ENCODE measurements at regions of chr3 and their contacts with region 1.

Region 1: DNA sequence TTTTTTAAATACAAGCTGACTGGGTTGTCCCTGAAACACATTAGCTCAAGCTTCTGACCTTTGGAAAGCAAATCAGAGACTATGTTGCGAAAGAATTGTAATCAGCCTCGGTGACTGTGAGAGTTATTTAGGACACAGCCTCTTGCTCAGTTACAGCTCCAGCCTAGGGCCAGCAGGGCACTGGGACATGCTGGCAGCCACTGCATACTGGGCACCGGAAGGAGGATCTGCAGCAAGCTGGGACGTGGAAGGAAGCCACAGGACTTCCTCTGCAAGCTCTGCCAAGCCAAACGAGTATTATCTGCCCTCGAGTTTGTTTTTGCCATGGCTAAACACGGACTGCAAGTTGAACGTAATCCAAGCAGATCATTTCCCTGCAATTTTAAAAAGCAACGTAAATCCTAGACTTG is 24.4 kb upstream of the COPG1 start:
- DNase-seq: no peak
- H3K4me3 ChIP-seq: peak overlapping the region; percentile 35
- H3K27ac ChIP-seq: peak overlapping the region; percentile 77
- H3K27me3 ChIP-seq: no peaks in the 10 kb centered on the region
- CTCF ChIP-seq: no peak

Region 2: DNA sequence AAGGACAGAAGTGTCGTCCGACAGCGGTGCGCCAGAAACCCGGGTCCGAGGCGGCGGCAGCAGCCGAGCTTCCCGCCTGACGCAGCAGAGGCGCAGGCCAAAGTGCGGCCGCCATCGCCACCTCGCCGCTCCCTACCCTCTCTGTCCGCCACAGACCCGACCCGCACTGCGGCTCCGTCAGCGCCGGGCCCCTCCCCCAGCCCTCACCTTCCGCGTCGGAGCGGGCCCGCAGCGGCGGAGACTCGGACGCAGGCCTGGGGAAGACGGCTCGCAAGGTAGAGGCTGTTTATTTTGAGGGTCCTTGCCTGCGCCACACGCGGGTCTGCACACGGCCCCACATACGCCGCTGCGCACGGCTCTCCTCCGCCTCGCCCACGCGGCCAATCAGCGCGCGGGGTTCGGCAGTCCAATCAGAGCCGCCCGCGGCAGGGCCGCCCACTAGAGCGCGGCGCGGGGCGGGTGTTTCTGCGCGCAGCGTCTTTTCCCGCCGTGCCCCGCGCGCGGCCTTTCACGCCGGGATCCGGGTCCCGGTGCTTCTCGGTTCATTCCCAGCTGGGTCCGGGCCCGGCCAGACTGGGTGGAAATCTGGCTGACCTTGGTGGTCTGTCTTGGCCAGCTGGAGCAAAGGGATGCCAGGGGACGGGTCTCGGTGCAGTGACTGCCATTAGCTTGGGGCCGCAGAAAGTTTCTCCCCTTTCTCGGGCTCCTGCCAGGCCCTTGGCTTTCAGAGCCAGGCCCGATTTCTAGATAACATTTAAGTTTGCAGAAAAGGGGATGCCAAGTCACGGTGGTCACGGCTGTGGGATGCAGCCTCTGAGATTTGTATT is 41.2 kb before region 1 on chr3 and contains the start of gene CNBP:
- CTCF ChIA-PET with region 1: interaction called, 3 read pairs
- POLR2A ChIA-PET with region 1: interaction called, 12 read pairs
- DNase-seq: peak; percentile 82
- H3K4me3 ChIP-seq: peak within 1 kb of the TSS; percentile 96
- H3K27ac ChIP-seq: peak within 1 kb of the TSS; percentile 81
- H3K27me3 ChIP-seq: no peaks in the 10 kb centered on the region
- CTCF ChIP-seq: no peak
- polyA plus RNA-seq, gene CNBP: 265 and 305 TPM in 2 replicates

Region 3: GRCh38 chr3:129263161-129264070 is 38.4 kb after region 1 on chr3:
- CTCF ChIA-PET with region 1: no interaction called
- POLR2A ChIA-PET with region 1: no interaction called
- DNase-seq: no peak
- H3K4me3 ChIP-seq: no peak overlapping the region
- H3K27ac ChIP-seq: no peak overlapping the region
- H3K27me3 ChIP-seq: no peaks in the 10 kb centered on the region
- CTCF ChIP-seq: no peak